Dorsolateral prefrontal cortex (tissue), 120 donors: ENCODE measurements at regions of chr16 and their contacts with region 1.

Region 1: DNA sequence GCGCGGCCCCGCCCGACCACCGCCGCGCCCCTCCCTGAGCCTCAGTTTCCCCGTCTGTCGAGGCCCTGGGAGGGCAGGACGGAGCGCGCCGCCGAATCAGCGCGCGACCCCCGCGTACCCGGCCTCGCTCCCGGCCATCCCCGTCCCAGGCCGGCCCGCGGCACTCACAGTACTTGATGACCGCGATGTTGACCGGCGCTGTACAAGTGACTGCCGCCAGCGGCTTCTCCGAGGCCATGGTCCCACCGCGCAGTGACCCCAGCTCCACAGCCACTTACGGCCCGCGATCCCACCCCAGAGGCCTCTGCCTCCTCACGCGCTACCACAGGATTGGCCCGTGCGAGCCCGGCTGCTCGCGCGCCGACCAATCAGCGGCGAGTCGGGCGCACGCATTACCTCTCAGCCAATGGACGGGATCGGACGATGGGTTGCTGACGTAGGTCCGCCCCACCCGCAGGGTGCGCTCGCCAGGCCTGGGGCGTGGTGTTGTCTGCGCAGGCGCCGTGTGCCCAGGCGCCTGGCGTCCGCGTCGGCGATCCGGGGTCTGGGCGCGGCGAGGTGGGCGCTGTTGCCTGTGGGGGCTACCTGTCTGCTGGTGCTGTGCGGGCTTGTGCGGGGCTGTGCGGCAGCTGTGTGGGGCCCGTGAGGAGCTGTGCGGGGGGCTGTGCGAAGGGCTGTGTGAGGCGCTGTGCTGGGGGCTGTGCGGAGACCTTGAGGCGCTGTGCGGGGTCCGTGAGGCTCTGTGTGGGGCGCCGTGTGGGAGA is at the start of gene MVD:
- DNase-seq: peak; percentile 96 to 100 (median 97)
- H3K4me3 ChIP-seq: peak within 1 kb of the TSS; percentile 64 to 100 (median 95)
- H3K27ac ChIP-seq: peak within 1 kb of the TSS in 56 of 59 donors; percentile 30 to 96 (median 85)
- H3K27me3 ChIP-seq: no peaks in the 10 kb centered on the region
- CTCF ChIP-seq: peak in 22 of 56 donors; percentile 11 to 46 (median 26)
- total RNA-seq, gene MVD: 44.3 to 110 (median 70.6) TPM

Region 2: GRCh38 chr16:88405216-88406060 is 257.6 kb before region 1 on chr16:
- intact Hi-C with region 1: no loop called
- DNase-seq: peak in 1 of 10 donors; percentile 52
- H3K4me3 ChIP-seq: peak overlapping the region in 7 of 59 donors; percentile 6 to 27 (median 18)
- H3K27ac ChIP-seq: no peak overlapping the region
- H3K27me3 ChIP-seq: peaks cover 0 to 7% (median 0%) of the 10 kb centered on the region in 45 donors
- CTCF ChIP-seq: no peak

Region 3: DNA sequence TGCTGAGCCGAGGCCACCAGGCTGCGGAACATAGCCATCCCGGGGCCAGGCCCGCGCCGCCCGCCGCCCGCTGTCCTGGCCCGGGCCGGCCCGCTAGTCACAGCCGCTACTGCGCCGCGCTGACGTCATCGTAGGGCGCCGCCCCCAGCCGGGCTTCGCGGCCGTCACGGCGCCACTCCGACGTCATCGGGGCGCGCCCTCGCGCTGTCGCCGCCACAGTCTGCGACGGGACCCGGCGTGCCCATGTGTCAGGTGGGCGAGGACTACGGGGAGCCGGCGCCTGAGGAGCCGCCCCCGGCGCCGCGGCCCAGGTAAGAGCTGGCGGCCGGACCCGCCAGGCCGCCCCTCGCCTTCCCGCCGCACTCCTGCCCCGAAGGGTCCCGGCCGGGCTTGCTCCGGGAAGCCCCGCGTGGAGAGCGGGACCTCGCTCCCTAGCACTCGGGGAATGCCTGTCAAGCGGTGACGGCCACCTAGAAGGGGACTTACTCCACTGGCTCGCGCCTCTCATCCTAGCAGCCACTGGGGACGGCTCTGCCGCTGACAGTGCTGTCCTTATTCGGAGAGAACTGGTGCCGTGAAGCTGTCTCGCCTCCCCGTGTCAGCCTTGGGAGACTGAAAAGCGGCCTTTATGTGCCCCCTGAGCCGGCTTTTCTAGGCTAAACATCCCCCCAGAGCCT is 43.4 kb after region 1 on chr16 and contains the starts of genes CTU2 and RNF166:
- intact Hi-C with region 1: loop called (anchors 2 kb)
- DNase-seq: peak; percentile 78 to 95 (median 90)
- H3K4me3 ChIP-seq: peak within 1 kb of the TSS; percentile 63 to 100 (median 98)
- H3K27ac ChIP-seq: peak within 1 kb of the TSS in 55 of 59 donors; percentile 8 to 94 (median 80)
- H3K27me3 ChIP-seq: no peaks in the 10 kb centered on the region
- CTCF ChIP-seq: peak in 17 of 56 donors; percentile 1 to 47 (median 23)
- total RNA-seq, gene CTU2: 14.1 to 40.3 (median 24.0) TPM
- total RNA-seq, gene RNF166: 15.1 to 52.4 (median 24.8) TPM

Region 4: DNA sequence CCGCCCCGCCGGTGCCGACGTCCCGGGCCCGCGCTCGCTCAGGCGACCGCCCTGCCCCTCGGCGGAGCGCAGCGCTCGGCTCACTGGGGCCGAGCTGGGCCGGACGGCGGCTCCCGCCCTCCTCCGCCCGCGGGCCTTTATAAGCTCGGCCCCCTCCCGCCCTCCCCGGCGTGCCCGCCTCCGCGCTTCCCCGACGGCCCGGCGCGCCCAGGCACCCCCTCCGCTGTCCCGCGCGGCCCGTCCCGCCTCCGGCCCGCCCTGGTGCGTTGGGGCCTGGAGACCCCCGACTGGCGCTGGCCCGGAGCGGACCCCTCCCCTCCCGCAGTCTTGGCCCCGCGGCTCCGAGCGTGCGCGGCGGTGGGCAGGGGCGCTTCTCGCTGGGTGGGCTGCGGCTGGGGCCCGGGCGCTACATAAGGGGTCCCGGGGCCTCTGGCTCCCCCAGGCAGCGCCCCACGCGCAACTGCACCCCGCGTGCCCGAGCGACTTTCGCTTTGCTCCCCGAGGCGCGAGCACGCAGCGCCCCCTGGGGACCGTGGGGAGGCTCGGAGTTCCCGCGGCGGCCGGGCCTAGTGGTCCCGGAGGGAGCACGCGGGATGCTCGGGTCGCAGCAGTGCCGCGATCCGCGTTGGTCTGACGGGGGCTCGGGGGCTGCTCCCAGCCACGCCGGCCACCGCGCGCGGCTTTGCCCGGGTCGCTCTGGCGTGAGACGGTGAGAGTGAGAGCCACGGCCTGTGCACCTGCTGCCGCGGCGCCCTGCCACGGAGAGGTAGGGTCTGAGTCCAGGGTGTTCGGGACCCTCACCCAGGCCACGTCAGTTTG is 122.3 kb after region 1 on chr16 and contains the start of gene PIEZO1:
- intact Hi-C with region 1: loop called in 1 of 2 experiments (anchors 10 kb)
- DNase-seq: peak in 8 of 10 donors; percentile 42 to 80 (median 60)
- H3K4me3 ChIP-seq: peak within 1 kb of the TSS; percentile 36 to 81 (median 68)
- H3K27ac ChIP-seq: peak within 1 kb of the TSS; percentile 46 to 92 (median 82)
- H3K27me3 ChIP-seq: peaks cover 0 to 30% (median 0%) of the 10 kb centered on the region in 45 donors
- CTCF ChIP-seq: peak; percentile 53 to 96 (median 87)
- total RNA-seq, gene PIEZO1: 14.6 to 86.5 (median 34.6) TPM

Region 5: DNA sequence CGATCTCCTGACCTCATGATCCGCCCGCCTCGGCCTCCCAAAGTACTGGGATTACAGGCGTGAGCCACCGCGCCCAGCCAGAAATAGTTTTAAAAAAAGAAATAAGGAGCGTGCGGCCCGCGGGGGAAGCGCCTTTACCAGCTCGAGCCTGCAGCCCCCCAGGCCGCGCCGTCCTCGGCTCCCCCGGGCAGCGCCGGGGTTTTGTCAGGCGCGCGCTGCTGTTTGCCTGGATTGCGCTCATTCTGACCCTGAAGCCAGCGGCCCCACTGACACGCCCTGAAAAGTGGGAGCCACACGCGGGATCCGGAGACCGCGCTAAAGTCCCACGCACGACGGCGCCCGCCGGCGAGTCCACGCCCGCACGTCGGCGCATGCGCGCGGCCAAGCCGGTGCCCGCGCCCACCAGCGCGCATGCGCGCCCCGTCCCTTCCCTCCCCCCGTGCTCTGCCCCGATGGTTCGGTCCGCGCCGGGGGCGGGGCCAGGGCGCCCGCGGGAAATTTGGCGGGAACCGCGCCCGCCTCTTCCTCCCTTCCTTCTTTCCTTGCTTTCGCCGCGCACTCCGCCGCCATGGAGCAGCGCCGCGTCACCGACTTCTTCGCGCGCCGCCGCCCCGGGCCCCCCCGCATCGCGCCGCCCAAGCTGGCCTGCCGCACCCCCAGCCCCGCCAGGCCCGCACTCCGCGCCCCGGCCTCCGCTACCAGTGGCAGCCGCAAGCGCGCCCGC is 140.4 kb after region 1 on chr16 and contains the start of gene CDT1:
- intact Hi-C with region 1: loop called in 1 of 2 experiments (anchors 5 kb)
- DNase-seq: peak in 8 of 10 donors; percentile 44 to 88 (median 67)
- H3K4me3 ChIP-seq: peak within 1 kb of the TSS; percentile 43 to 84 (median 72)
- H3K27ac ChIP-seq: peak within 1 kb of the TSS in 38 of 59 donors; percentile 6 to 87 (median 57)
- H3K27me3 ChIP-seq: no peaks in the 10 kb centered on the region
- CTCF ChIP-seq: peak in 21 of 56 donors; percentile 8 to 44 (median 22)
- total RNA-seq, gene CDT1: 0.49 to 5.3 (median 2.0) TPM

Region 6: GRCh38 chr16:88977018-88977811 is 314.2 kb after region 1 on chr16 and contains the start of gene CBFA2T3:
- intact Hi-C with region 1: no loop called
- DNase-seq: peak in 4 of 10 donors; percentile 29 to 49 (median 44)
- H3K4me3 ChIP-seq: peak within 1 kb of the TSS in 24 of 59 donors; percentile 1 to 48 (median 25)
- H3K27ac ChIP-seq: no peak within 1 kb of the TSS
- H3K27me3 ChIP-seq: peaks cover 0 to 25% (median 0%) of the 10 kb centered on the region in 45 donors
- CTCF ChIP-seq: no peak
- total RNA-seq, gene CBFA2T3: 4.3 to 33.0 (median 16.9) TPM